ENCODE measurements at regions of chr17 and their contacts with region 1.

Region 1: DNA sequence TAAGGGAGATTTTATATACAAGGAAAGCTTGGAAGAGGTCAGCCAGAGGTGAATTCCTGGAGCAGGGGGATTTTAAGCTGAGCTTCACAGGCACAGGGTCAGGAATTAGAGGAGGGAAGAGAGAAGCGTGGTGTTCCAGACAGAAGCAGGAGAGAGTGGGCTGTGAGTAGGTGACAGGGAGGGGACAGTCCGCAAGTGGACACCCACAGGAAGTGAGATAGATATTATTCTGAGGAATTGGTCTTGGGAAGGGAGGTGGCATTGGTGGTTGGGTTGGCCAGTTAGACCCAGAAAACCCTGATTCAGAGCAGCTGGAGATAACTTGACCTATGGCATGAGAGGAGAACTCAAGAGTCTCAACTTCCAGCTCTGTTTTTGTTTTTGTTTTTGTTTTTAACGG is 14.7 kb downstream of the PHB1 start:
- DNase-seq: no peak
- H3K4me3 ChIP-seq: no peak overlapping the region
- H3K27ac ChIP-seq: no peak overlapping the region
- H3K4me1 ChIP-seq: peaks cover 0 to 16% (median 10%) of the 10 kb centered on the region in 4 donors
- H3K27me3 ChIP-seq: no peaks in the 10 kb centered on the region
- CTCF ChIP-seq: no peak
- EP300 ChIP-seq: no peak
- POLR2A ChIP-seq: no peak

Region 2: GRCh38 chr17:49361902-49362722 is 37.9 kb before region 1 on chr17 and contains the start of gene ZNF652:
- intact Hi-C with region 1: loop called (anchors 5 kb)
- DNase-seq: peak; percentile 95
- H3K4me3 ChIP-seq: peak within 1 kb of the TSS; percentile 86 to 100 (median 96)
- H3K27ac ChIP-seq: peak within 1 kb of the TSS; percentile 94 to 95 (median 95)
- H3K4me1 ChIP-seq: peaks cover 14 to 54% (median 48%) of the 10 kb centered on the region in 4 donors
- H3K27me3 ChIP-seq: no peaks in the 10 kb centered on the region
- CTCF ChIP-seq: no peak
- EP300 ChIP-seq: no peak
- POLR2A ChIP-seq: no peak
- total RNA-seq, gene ZNF652: 59.3 to 100.0 (median 83.0) TPM

Measured in esophagus muscularis mucosa (tissue), 4 donors.